ENCODE measurements at regions of chr2 and their contacts with region 1.

Region 1: DNA sequence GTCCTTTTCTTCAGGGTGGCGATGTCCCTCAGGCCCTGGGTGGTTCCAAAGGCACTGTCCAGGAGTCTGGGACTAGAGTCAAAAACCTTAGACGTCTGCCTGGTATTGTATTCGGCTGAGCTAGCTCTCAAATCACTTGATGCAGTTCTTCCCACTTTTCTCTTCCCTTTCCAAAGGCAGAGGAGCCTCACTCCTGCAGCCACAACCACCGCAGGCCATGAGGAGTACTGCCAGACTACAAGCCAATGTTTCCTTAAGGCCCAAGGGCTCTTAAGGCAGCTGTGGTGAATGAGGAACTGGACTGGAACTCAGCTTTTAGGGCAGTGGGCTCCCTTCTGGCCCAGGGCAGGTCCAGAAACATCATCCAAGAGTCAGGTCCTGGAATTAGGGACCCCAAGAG is 360.7 kb downstream of the SPAG16 start:
- DNase-seq: no peak
- H3K4me3 ChIP-seq: no peak overlapping the region
- H3K27ac ChIP-seq: no peak overlapping the region
- H3K4me1 ChIP-seq: no peaks in the 10 kb centered on the region
- H3K27me3 ChIP-seq: no peaks in the 10 kb centered on the region
- CTCF ChIP-seq: no peak
- POLR2A ChIP-seq: no peak

Region 2: DNA sequence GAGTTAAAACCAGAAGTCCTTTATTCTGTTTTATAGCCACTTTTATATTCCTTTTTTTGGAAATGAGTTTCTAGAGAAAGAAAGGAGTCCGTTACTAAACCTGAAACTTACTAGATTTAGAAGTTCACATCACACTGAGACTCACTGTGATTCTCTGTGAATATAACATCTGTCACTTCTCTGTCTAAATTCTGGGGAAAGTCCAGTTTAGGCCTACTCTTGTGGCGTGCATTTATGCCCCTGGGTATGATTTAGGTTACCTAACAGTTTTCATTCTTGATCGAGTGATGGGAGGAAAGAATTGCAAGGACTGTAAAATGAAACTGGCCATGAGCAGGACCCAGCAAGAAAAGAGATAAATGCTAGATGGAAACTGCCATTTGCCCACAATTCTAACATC is 89.0 kb after region 1 on chr2:
- intact Hi-C with region 1: no loop called
- DNase-seq: no peak
- H3K4me3 ChIP-seq: no peak overlapping the region
- H3K27ac ChIP-seq: no peak overlapping the region
- H3K4me1 ChIP-seq: no peaks in the 10 kb centered on the region
- H3K27me3 ChIP-seq: no peaks in the 10 kb centered on the region
- CTCF ChIP-seq: no peak
- POLR2A ChIP-seq: no peak

Region 3: GRCh38 chr2:214628091-214628490 is 983.2 kb after region 1 on chr2:
- intact Hi-C with region 1: loop called (anchors 5 kb)
- DNase-seq: no peak
- H3K4me3 ChIP-seq: no peak overlapping the region
- H3K27ac ChIP-seq: no peak overlapping the region
- H3K4me1 ChIP-seq: no peaks in the 10 kb centered on the region
- H3K27me3 ChIP-seq: no peaks in the 10 kb centered on the region
- CTCF ChIP-seq: no peak
- POLR2A ChIP-seq: no peak

Region 4: DNA sequence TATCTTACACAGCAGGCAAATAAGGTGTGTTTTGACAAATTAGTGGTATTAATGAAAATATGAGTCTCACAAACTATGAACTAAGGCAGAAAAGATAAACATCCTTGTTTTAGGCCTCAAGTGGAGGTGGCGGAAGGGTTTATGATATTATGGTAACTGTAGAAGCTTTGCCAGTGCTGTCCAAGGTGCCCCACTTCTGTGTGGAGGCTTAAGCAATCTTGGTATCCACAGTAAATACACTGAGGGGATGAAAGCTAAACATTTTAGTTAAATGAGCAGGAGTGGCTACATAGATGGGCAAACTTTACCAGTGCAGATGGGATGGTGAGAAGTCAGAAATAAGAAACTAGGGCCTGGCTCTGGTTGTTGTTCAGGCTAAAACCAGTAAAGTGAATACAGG is 1079.8 kb after region 1 on chr2:
- intact Hi-C with region 1: no loop called
- DNase-seq: no peak
- H3K4me3 ChIP-seq: no peak overlapping the region
- H3K27ac ChIP-seq: no peak overlapping the region
- H3K4me1 ChIP-seq: no peaks in the 10 kb centered on the region
- H3K27me3 ChIP-seq: no peaks in the 10 kb centered on the region
- CTCF ChIP-seq: no peak
- POLR2A ChIP-seq: no peak

Measured in breast epithelium (tissue), 4 donors.